ENCODE measurements at regions of chr1 and their contacts with region 1.

Region 1: GRCh38 chr1:182084487-182085316 is 23.2 kb upstream of the ZNF648 start:
- DNase-seq: peak; percentile 86 to 98
- H3K4me3 ChIP-seq: no peak overlapping the region; a peak in 1 of 8 replicates
- H3K27ac ChIP-seq: peak overlapping the region; percentile 51; the same call in 1 of the 2 replicates
- H3K4me1 ChIP-seq: peaks cover 0 to 11% (median 4%) of the 10 kb centered on the region in 4 experiments; a peak in 4 of 7 replicates
- H3K27me3 ChIP-seq: no peaks in the 10 kb centered on the region
- CTCF ChIP-seq: peak; percentile 76 to 90 (median 89)
- EP300 ChIP-seq: no peak
- POLR2A ChIP-seq: no peak
- RAD21 ChIP-seq: peak; percentile 99 to 100

Region 2: DNA sequence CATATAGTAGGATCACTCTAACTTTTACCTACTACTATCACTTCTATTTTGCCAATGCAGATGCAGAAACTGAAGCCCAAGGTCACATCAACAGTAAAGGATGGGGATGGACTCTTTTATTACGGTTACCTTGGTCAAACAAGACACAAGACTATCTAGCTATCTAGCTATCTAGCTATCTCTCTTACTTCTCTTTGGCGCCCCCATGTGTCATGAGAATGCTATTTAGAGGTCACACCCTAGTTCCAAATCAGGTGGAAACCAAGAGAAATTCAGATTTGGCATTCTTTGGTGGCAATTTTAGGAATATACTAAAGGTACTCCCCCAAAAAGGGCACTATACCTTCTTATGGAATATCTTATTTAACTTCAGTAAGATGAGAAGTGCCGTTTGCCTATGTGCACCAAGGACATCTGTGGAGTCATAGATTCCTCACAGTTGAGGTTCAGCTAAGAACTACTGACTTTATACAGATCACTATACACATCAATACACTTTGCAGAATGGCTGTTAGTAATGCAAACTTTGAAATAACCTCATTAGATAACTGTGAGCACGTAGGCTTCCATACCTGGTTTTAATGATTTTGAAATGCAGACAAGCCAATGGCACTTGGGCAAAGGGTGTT is 29.9 kb before region 1 on chr1:
- CTCF ChIA-PET with region 1: interaction called, 28 read pairs
- POLR2A ChIA-PET with region 1: no interaction called
- DNase-seq: peak in 1 of 2 experiments; percentile 77
- H3K4me3 ChIP-seq: no peak overlapping the region
- H3K27ac ChIP-seq: no peak overlapping the region
- H3K4me1 ChIP-seq: no peaks in the 10 kb centered on the region; a peak in 1 of 7 replicates
- H3K27me3 ChIP-seq: peaks cover 0 to 13% (median 7%) of the 10 kb centered on the region in 4 experiments; a peak in 3 of 7 replicates
- CTCF ChIP-seq: peak in 2 of 3 experiments; percentile 55 to 74; a peak in 2 of 4 replicates
- EP300 ChIP-seq: no peak
- POLR2A ChIP-seq: no peak
- RAD21 ChIP-seq: peak; percentile 76 to 78

Region 3: GRCh38 chr1:182113879-182114626 is 29.4 kb after region 1 on chr1:
- CTCF ChIA-PET with region 1: interaction called, 56 read pairs
- POLR2A ChIA-PET with region 1: interaction called, 5 read pairs
- DNase-seq: peak in 1 of 2 experiments; percentile 44
- H3K4me3 ChIP-seq: no peak overlapping the region
- H3K27ac ChIP-seq: no peak overlapping the region
- H3K4me1 ChIP-seq: peaks cover 0 to 2% (median 0%) of the 10 kb centered on the region in 4 experiments; a peak in 1 of 7 replicates
- H3K27me3 ChIP-seq: no peaks in the 10 kb centered on the region
- CTCF ChIP-seq: no peak
- EP300 ChIP-seq: no peak
- POLR2A ChIP-seq: no peak
- RAD21 ChIP-seq: no peak

Region 4: DNA sequence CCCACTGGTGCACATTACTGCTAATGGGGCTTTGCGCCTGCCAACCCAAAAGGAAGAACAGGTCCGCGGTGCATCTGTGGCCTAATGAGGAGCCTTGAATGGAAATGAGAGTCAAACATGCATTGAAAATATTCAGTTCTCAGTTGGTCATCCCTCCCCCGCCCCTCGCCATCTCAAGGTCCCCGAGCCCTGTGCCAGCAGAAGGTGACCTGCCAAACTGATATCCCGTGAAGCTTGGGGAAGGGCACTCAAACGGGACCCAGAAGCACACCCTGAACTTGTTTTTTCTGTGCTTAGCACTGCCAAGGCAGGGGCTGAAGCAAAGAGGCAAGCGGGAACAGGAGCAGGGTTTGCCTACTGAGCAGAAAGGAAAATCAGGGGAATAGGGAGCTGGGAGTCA is 44.7 kb after region 1 on chr1:
- CTCF ChIA-PET with region 1: interaction called, 33 read pairs
- POLR2A ChIA-PET with region 1: no interaction called
- DNase-seq: no peak
- H3K4me3 ChIP-seq: no peak overlapping the region
- H3K27ac ChIP-seq: no peak overlapping the region
- H3K4me1 ChIP-seq: peaks cover 0 to 4% (median under 1%) of the 10 kb centered on the region in 4 experiments; a peak in 1 of 7 replicates
- H3K27me3 ChIP-seq: no peaks in the 10 kb centered on the region; a peak in 1 of 7 replicates
- CTCF ChIP-seq: no peak
- EP300 ChIP-seq: no peak
- POLR2A ChIP-seq: no peak
- RAD21 ChIP-seq: no peak

Region 5: DNA sequence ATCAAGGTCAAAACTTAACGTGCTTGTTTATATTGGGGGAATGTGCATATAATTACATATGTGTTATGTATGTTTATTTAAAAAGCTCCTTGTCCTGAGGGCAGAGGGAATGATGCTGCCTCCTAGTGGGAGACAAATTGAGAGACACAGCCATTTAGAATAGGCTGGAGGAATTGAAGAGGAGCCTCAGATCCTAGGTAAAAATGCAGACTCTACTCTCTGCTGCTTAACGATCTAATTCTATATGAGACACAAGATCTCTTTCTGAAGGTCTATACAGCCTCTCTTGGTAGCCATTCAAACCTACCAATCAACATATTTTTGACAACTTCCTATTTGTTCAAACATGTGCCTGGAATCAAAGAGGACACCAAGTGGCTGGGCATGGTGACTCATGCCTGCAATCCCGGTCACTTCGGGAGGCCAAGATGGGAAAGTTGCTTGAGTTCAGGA is 113.4 kb after region 1 on chr1:
- CTCF ChIA-PET with region 1: interaction called, 15 read pairs
- POLR2A ChIA-PET with region 1: no interaction called
- DNase-seq: no peak
- H3K4me3 ChIP-seq: no peak overlapping the region
- H3K27ac ChIP-seq: no peak overlapping the region
- H3K4me1 ChIP-seq: no peaks in the 10 kb centered on the region
- H3K27me3 ChIP-seq: no peaks in the 10 kb centered on the region
- CTCF ChIP-seq: peak in 2 of 3 experiments; percentile 40 to 65; a peak in 2 of 4 replicates
- EP300 ChIP-seq: no peak
- POLR2A ChIP-seq: no peak
- RAD21 ChIP-seq: peak; percentile 51 to 58

Region 6: GRCh38 chr1:182397771-182398393 is 313.2 kb after region 1 on chr1:
- CTCF ChIA-PET with region 1: interaction called, 88 read pairs
- POLR2A ChIA-PET with region 1: interaction called, 13 read pairs
- DNase-seq: no peak
- H3K4me3 ChIP-seq: no peak overlapping the region
- H3K27ac ChIP-seq: no peak overlapping the region
- H3K4me1 ChIP-seq: peaks cover 3 to 4% (median 3%) of the 10 kb centered on the region in 4 experiments; a peak in 4 of 7 replicates
- H3K27me3 ChIP-seq: no peaks in the 10 kb centered on the region; a peak in 1 of 7 replicates
- CTCF ChIP-seq: no peak
- EP300 ChIP-seq: no peak
- POLR2A ChIP-seq: no peak
- RAD21 ChIP-seq: no peak

Region 7: GRCh38 chr1:182595641-182596240 is 511.0 kb after region 1 on chr1:
- CTCF ChIA-PET with region 1: interaction called, 35 read pairs
- POLR2A ChIA-PET with region 1: no interaction called
- DNase-seq: peak in 1 of 2 experiments; percentile 90
- H3K4me3 ChIP-seq: no peak overlapping the region
- H3K27ac ChIP-seq: no peak overlapping the region
- H3K4me1 ChIP-seq: no peaks in the 10 kb centered on the region
- H3K27me3 ChIP-seq: no peaks in the 10 kb centered on the region
- CTCF ChIP-seq: peak; percentile 78 to 92 (median 87)
- EP300 ChIP-seq: no peak
- POLR2A ChIP-seq: no peak
- RAD21 ChIP-seq: peak; percentile 84 to 89